CD8-positive, alpha-beta T cell (primary cell): ENCODE measurements at regions of chr7 and their contacts with region 1.

Region 1: DNA sequence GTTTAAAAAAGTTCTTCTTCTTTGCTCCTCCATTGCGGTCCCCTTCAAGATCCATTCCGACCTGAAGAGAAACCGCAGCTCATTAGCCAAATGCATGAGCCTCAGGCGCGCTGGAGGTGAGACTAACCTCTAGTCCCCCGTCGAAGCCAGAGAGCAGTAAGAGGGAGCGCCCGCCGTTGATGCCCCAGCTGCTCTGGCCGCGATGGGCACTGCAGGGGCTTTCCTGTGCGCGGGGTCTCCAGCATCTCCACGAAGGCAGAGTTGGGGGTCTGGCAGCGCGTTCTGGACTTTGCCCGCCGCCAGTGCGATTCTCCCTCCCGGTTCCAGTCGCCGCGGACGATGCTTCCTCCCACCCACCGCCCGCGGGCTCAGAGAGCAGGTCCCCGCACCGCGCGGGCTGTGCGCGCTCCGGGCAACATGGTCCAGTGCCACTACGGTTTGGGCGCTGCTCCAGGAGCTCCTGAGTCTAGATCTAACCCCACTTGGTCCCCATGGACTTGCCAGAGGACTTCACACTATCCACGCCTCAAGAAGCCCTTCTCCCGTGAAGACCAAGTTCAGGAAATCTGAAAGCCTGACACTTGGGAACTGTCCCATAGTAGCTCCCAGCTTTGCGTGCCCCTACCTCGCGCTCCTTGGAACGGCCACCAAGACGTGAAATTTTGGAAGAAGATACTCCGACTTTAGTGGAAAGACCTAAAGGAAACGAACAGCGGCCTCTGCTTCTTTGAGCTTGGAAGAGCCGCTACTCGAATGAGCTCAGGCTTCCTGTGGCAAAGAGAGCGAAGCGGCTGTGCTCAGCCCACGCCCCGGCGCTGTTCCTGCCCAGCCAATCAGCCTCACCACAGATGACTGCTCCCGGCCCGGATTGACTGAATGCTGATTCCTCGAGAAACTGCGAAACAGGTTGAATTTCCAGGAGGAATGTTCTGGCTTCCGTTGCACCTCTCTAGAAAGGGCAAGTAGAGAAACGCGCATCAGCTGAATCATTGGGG is at the start of gene ABCB1:
- DNase-seq: peak; percentile 12 to 76 (median 60)
- ATAC-seq: peak; percentile 88
- H3K4me3 ChIP-seq: peak within 1 kb of the TSS; percentile 83 to 89
- H3K4me3 Mint-ChIP-seq: peak within 1 kb of the TSS; percentile 83
- H3K27ac ChIP-seq: peak within 1 kb of the TSS; percentile 71 to 77
- H3K27ac Mint-ChIP-seq: peak within 1 kb of the TSS; percentile 92
- H3K4me1 ChIP-seq: peaks cover 20% of the 10 kb centered on the region
- H3K4me1 Mint-ChIP-seq: peaks cover 36% of the 10 kb centered on the region
- H3K27me3 ChIP-seq: peaks cover 0 to 2% of the 10 kb centered on the region in 2 experiments
- H3K27me3 Mint-ChIP-seq: peaks cover 3% of the 10 kb centered on the region
- CTCF ChIP-seq: no peak
- total RNA-seq, gene ABCB1: 38.4 to 40.0 TPM

Region 2: GRCh38 chr7:87564289-87564963 is 36.0 kb before region 1 on chr7:
- CTCF ChIA-PET with region 1: interaction called, 4 read pairs
- POLR2A ChIA-PET with region 1: no interaction called
- intact Hi-C with region 1: loop called in 1 of 2 experiments (anchors 2 kb)
- DNase-seq: peak in 7 of 9 experiments; percentile 3 to 59 (median 31)
- ATAC-seq: no peak
- H3K4me3 ChIP-seq: no peak overlapping the region
- H3K4me3 Mint-ChIP-seq: no peak overlapping the region
- H3K27ac ChIP-seq: no peak overlapping the region
- H3K27ac Mint-ChIP-seq: no peak overlapping the region
- H3K4me1 ChIP-seq: peaks cover 3% of the 10 kb centered on the region
- H3K4me1 Mint-ChIP-seq: peaks cover 10% of the 10 kb centered on the region
- H3K27me3 ChIP-seq: no peaks in the 10 kb centered on the region
- H3K27me3 Mint-ChIP-seq: no peaks in the 10 kb centered on the region
- CTCF ChIP-seq: peak; percentile 22

Region 3: DNA sequence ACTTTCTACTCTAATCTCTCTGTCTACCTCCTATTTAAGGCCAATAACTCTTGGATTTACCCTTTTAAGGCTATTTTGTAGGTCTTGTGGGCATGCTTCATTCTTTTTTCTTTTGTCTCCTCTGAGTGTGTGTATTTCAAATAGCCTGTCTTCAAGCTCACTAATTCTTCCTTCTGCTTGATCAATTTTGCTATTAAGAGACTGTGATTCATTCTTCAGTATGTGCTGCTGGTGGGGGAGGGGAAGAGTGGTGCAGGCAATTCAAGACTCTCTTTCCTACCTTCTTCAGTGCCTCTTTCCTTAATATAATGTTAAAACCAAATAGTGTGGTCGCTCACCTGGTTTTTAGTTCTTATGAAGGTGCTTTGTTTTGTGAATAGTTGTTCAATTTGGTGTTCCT is 19.8 kb before region 1 on chr7:
- CTCF ChIA-PET with region 1: interaction called, 10 read pairs
- POLR2A ChIA-PET with region 1: interaction called, 7 read pairs
- intact Hi-C with region 1: no loop called
- DNase-seq: no peak
- ATAC-seq: no peak
- H3K4me3 ChIP-seq: no peak overlapping the region
- H3K4me3 Mint-ChIP-seq: no peak overlapping the region
- H3K27ac ChIP-seq: no peak overlapping the region
- H3K27ac Mint-ChIP-seq: no peak overlapping the region
- H3K4me1 ChIP-seq: no peaks in the 10 kb centered on the region
- H3K4me1 Mint-ChIP-seq: peaks cover 4% of the 10 kb centered on the region
- H3K27me3 ChIP-seq: no peaks in the 10 kb centered on the region
- H3K27me3 Mint-ChIP-seq: no peaks in the 10 kb centered on the region
- CTCF ChIP-seq: no peak